HepG2 (cell line): ENCODE measurements at regions of chr12 and their contacts with region 1.

Region 1: DNA sequence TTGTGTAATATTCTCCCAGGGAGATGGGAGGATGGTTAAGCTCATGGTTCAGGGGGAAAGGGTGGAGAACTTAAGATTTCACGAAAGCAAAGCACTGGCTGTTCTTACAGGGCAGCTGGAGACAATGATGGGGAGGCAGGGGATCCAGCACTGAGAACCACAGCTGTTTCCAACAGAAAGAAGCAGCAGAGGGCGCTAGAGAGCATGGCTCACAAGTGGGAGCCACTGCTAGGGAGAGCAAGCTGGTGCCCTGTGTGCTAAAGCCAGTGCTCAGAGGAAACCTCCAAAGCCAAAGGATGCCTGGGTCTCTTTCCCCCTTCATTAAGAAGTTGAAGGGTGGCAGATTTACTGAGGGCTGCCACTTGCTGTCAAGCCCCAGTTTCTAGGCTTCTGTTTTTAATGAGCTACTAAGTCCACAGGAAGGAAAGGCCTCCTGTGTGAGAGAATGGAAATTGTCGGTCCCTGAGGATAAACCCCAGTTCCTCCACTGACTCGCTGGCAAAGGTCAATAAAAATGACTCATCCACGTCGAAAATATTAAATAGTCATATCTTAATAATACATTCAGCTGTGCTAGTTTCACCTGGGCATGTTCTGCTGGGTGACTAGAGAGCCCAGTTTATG is 199.7 kb downstream of the ANO2 start:
- DNase-seq: peak; percentile 36
- ATAC-seq: peak; percentile 94
- H3K4me3 ChIP-seq: no peak overlapping the region
- H3K27ac ChIP-seq: no peak overlapping the region
- H3K4me1 ChIP-seq: no peaks in the 10 kb centered on the region
- H3K27me3 ChIP-seq: no peaks in the 10 kb centered on the region
- CTCF ChIP-seq: peak; percentile 73
- EP300 ChIP-seq: no peak
- POLR2A ChIP-seq: no peak
- RAD21 ChIP-seq: no peak

Region 2: GRCh38 chr12:5665615-5666014 is 79.8 kb before region 1 on chr12:
- CTCF ChIA-PET with region 1: no interaction called
- POLR2A ChIA-PET with region 1: no interaction called
- in situ Hi-C with region 1: no loop called
- intact Hi-C with region 1: no loop called
- DNase-seq: no peak
- ATAC-seq: no peak
- H3K4me3 ChIP-seq: no peak overlapping the region
- H3K27ac ChIP-seq: no peak overlapping the region
- H3K4me1 ChIP-seq: no peaks in the 10 kb centered on the region
- H3K27me3 ChIP-seq: no peaks in the 10 kb centered on the region
- CTCF ChIP-seq: no peak
- EP300 ChIP-seq: no peak
- POLR2A ChIP-seq: no peak
- RAD21 ChIP-seq: no peak

Region 3: DNA sequence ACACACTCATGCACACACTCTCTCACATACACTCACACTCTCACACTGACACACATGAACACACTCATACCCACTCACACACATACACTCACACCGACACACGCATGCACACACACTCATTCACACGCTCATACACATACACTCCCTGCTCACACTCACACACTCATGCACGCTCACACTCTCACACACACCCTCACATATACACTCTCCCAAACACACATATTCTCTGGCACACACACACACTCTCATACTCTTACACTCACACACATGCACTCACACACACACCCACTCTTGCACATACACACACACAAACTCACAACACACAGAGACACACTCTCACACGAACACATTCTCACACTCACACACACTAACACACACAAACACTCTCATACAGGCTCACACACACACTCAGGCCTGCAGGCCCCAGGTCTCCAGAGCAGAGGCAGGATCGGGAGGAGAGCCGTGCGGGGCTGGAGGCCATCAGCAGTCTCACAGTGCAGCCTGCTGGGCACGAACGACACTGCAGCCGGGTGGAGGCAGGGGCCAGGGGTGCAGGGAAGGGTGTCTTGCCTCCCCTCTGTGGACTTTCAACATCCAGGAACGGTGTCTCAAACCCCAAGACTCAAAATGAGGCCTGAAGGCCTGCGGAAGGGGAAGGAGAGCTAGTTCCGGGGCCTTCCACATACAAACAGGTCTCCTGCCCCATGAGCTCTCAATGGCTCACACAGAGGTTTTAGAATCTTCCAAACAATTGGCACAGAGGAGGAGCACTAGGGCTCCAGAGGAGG is 51.0 kb after region 1 on chr12:
- CTCF ChIA-PET with region 1: interaction called, 9 read pairs
- POLR2A ChIA-PET with region 1: no interaction called
- in situ Hi-C with region 1: no loop called
- intact Hi-C with region 1: loop called (anchors 1 kb)
- DNase-seq: peak; percentile 5
- ATAC-seq: peak; percentile 98
- H3K4me3 ChIP-seq: no peak overlapping the region
- H3K27ac ChIP-seq: no peak overlapping the region
- H3K4me1 ChIP-seq: no peaks in the 10 kb centered on the region
- H3K27me3 ChIP-seq: peaks cover 1 to 6% of the 10 kb centered on the region in 2 experiments; a peak in 2 of 5 replicates
- CTCF ChIP-seq: peak; percentile 88
- EP300 ChIP-seq: no peak
- POLR2A ChIP-seq: no peak
- RAD21 ChIP-seq: peak; percentile 77

Region 4: DNA sequence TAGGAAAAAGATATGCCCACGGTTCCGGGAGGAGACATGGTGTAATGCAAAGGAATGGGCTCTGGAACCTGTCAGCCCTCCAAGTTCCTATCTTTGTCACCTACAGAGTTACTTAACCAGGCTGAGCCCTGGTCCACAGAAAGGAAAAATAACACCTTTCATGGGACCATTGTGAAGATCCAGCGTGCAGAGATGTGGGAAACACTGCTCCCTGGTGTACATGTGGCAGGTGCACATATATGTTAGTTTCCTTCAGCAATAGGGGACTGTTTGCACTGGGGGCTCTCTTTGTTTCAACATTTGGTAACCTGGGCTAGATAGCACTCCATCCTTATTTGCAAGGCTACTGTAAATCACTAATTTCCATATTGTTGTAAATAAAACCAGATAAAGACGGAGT is 127.4 kb after region 1 on chr12:
- CTCF ChIA-PET with region 1: no interaction called
- POLR2A ChIA-PET with region 1: no interaction called
- in situ Hi-C with region 1: loop called (anchors 10 kb)
- intact Hi-C with region 1: no loop called
- DNase-seq: peak; percentile 12
- ATAC-seq: peak; percentile 74
- H3K4me3 ChIP-seq: no peak overlapping the region
- H3K27ac ChIP-seq: no peak overlapping the region
- H3K4me1 ChIP-seq: no peaks in the 10 kb centered on the region
- H3K27me3 ChIP-seq: peaks cover 3 to 8% of the 10 kb centered on the region in 2 experiments; a peak in 3 of 5 replicates
- CTCF ChIP-seq: peak; percentile 51
- EP300 ChIP-seq: no peak
- POLR2A ChIP-seq: no peak
- RAD21 ChIP-seq: no peak

Region 5: DNA sequence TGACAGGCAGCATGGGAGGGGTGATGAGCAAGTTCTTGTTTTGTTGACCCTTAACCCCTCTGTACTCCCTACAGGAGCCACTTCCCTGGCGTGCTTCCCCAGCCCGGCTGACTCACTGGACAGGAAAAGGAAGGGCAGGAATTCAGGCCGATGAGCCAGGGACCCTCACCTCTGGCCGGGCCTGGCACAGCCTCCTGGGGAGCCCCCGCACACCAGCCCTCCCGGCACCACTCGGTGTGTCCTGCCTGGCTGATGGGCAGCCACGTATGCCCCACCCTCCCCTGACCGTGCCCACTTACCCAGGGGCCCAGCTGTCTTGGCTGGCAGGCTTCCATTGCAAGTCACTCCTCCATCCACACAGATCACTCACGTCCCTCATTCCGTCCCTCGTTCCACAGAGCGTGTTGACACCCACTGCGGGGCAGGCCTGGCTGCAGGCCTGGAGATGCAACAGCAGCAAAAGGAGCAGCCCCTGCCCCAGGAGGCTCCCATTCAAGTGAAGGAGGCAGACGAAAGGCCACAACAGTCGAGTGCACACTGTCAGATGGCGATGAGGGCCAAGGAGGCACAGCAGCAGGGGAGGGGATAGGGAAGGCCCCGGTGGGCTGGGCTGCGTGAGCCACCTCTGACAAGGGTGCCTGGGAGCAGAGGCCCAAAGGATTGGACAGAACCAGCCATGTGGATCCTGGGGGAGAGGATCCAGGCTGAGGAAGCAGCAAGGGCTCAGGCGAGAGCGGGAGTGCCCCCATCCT is 435.1 kb after region 1 on chr12:
- CTCF ChIA-PET with region 1: no interaction called
- POLR2A ChIA-PET with region 1: no interaction called
- in situ Hi-C with region 1: no loop called
- intact Hi-C with region 1: no loop called
- DNase-seq: peak; percentile 76
- ATAC-seq: peak; percentile 45
- H3K4me3 ChIP-seq: peak overlapping the region in 1 of 3 experiments; percentile 49; a peak in 1 of 6 replicates
- H3K27ac ChIP-seq: no peak overlapping the region
- H3K4me1 ChIP-seq: peaks cover 67% of the 10 kb centered on the region
- H3K27me3 ChIP-seq: peaks cover 0 to 5% of the 10 kb centered on the region in 2 experiments; a peak in 2 of 5 replicates
- CTCF ChIP-seq: no peak
- EP300 ChIP-seq: no peak
- POLR2A ChIP-seq: no peak
- RAD21 ChIP-seq: no peak